GM18951 (cell line): ENCODE measurements at regions of chr10 and their contacts with region 1.

Region 1: GRCh38 chr10:80500572-80501380 is 36.9 kb upstream of the SH2D4B start:
- POLR2A ChIP-seq: no peak

Region 2: DNA sequence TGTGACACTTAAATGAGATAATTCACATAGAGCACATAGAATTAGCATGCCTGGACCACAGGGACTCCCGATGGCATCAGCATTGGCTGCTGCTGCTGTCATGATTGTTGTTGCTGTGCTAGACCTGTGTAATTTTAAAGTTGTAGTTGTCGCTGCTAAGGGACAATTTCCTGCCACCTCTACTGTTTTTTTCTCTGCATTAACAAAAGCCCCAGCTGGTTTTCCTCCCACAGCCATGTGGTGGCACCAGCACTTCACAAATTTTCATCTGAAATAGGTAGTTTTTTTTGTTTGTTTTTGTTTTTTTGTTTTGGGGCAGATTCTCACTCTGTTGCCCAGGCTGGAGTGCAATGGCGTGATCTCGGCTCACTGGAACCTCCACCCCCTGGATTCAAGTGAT is 117.8 kb before region 1 on chr10:
- in situ Hi-C with region 1: loop called (anchors 25 kb)
- POLR2A ChIP-seq: no peak

Region 3: DNA sequence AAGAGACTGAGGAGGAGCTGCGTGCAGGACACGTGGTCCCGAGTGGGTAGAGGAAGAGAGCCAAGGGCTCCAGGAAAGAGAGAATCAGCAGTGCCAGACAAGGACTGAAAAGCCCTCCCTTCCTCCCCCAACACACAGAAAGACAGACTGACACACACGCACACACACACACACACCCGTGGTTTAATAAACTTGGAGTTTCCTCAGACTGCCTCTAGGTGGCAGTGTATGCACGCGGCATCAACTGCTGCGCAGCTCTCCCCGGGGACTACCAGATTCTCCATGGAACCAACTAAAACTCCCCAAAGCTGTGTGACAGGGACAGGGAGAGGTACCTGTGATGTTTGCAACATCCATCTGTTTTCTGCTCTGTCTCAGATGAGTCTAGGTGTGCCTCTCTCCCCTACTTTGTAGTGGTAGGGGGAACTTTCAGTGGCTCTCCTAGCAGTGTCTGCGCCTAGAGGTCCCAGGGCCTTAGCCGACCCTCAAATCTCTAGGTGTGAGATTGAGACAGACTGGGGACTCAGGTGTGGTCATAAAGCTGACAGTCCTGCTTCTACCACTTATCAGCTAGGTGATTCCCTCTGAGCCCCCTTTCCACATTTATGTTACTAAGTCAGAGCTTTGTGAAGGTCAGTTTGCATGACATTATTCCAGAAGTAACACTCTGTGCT is 56.0 kb before region 1 on chr10:
- in situ Hi-C with region 1: loop called (anchors 5 kb)
- POLR2A ChIP-seq: no peak

Region 4: DNA sequence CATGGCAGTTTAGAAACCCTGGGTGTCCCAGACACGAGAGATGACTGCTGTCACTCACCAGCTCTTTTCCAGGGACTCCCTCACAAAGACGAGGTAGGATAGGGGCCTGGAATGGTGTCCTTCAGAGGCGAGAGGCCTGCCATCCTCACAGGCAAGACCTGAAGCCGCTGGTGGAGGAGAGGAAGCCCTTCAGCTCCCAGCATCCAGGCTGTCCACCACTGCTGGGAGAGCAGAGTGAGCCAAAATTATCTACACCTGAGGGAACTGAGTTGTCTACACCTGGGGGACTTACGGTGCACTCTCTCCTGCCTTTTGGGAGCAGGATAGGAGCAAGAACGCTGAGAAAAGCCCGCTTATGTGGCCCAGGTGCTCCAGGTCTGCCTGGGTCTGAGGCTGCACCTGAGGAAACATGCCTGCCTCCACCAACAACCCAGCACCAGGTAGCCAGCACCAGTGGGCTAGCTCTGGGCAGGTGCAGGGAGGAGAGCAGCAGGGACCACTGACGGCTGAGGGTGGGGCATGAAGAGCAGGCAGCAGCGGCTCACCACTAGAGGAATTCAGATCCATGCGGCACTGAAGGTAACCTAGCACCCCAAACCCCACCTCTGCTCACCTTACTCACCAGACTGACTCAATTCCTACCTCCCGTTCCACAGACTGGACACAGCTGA is 394.2 kb after region 1 on chr10:
- in situ Hi-C with region 1: no loop called
- POLR2A ChIP-seq: no peak